Activated CD4-positive, alpha-beta T cell treated with anti-CD3 and anti-CD28 coated beads, Interleukin-2, amount 10 ng/mL, durations not matched to agents 24 days and 14 days (primary cell): ENCODE measurements at regions of chr20 and their contacts with region 1.

Region 1: GRCh38 chr20:3679749-3680700 is 1.8 kb downstream of the ADAM33 start:
- DNase-seq: no peak
- H3K4me3 Mint-ChIP-seq: no peak overlapping the region
- H3K27ac Mint-ChIP-seq: no peak overlapping the region
- H3K4me1 Mint-ChIP-seq: peaks cover 2% of the 10 kb centered on the region
- H3K27me3 Mint-ChIP-seq: peaks cover 59% of the 10 kb centered on the region

Region 2: DNA sequence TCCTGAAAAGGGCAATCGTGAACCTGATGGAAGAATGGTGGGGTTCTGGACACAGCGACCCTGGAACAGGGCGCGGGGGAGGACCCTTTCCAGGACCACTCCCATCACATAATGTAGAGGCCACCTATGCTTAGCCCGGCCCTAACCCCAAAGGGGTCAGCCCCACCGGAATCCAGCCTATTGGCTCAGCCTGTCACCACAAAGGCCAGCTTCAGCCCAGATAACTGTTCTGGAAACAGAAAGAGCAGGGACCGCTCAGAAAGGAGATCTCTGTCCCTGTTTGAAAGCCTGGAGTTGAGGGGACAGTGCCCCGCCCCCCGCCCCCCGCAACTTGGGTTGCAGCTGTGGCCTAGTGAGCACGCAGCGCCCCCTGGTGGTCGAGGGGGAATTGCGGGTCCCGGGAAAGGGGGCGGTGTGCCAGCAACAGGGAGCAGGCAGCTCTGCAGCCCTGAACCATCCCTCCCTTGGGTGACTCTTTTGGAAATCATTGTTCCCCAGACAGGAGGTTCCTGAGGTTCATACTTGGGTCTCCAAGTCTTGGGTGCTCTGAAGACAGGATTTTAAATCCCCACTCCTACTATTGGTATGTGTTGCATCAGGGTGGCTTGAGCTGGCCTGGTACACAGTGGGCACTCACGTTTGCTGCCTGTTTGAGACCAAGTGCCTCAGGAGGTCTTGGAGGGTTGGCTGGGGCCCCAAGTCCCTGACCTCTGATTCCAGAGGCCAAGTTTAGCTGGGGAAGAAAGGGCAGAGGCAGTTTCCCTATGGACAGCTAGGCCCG is 30.9 kb after region 1 on chr20:
- intact Hi-C with region 1: loop called (anchors 2 kb)
- DNase-seq: peak; percentile 93
- H3K4me3 Mint-ChIP-seq: no peak overlapping the region
- H3K27ac Mint-ChIP-seq: no peak overlapping the region
- H3K4me1 Mint-ChIP-seq: peaks cover 3% of the 10 kb centered on the region
- H3K27me3 Mint-ChIP-seq: peaks cover 7% of the 10 kb centered on the region

Region 3: DNA sequence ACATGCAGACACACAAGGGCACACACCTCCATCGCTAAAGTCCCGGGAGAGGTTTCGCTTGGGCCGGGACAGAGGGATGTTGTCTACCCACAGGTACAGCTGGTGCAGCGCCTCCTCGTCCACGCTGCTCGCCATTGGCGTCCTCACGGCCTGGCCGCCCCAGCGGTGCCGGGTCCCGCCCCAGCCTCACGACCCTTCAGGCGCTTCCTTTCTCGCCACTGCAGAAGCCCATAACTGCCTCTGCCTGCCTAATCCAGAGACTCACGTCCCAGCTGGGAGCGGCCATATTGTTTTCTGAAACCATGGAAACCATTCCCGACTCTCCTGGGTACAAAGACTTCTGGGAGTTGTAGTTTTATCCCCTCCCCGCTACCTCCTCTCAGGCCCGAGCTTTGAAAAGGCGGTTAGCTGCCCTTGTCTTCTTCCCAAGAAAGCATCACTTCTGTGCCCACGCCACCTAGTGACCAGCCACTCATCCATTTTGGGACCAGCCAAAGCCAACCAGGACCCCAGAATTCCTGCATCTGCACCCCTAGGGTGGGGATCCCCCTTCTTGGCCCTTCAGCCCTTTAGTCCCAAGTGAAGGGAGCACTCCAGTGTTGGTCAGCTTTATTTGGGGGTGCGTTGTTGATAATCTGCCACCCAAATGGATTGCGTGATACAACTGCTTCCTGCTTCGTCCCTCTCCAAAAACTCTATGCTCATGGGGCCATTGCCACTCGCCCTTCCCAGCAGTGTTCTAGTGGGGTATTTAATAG is 101.3 kb after region 1 on chr20 and contains the start of gene SPEF1:
- intact Hi-C with region 1: loop called (anchors 10 kb)
- DNase-seq: peak; percentile 84
- H3K4me3 Mint-ChIP-seq: peak within 1 kb of the TSS; percentile 76
- H3K27ac Mint-ChIP-seq: no peak within 1 kb of the TSS
- H3K4me1 Mint-ChIP-seq: peaks cover 42% of the 10 kb centered on the region
- H3K27me3 Mint-ChIP-seq: peaks cover 22% of the 10 kb centered on the region
- total RNA-seq, gene SPEF1: not detected in 2 replicates